ENCODE measurements at regions of chr4 and their contacts with region 1.

Region 1: DNA sequence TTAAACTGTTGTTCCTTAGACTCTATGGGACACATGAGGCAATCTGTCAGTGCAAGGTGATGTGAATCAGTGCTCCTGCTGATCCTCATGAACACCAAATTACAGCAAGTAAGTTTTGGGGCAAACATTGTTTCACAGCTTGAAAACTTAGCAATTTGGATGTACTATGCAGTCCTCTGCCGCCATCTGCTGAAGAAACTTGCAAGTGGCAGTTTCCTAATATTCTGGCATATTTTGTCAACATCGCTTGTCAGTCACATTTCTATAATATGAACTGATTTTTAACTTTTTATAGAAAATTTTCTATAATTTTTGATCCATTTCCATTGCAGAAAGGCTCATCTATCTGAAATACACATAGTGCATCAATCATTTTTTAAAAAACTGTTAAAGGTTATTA is 56.3 kb downstream of the ZAR1 start:
- DNase-seq: peak; percentile 39
- ATAC-seq: no peak
- H3K4me3 ChIP-seq: no peak overlapping the region
- H3K27ac ChIP-seq: no peak overlapping the region
- H3K4me1 ChIP-seq: no peaks in the 10 kb centered on the region
- H3K27me3 ChIP-seq: no peaks in the 10 kb centered on the region
- CTCF ChIP-seq: peak; percentile 58

Region 2: GRCh38 chr4:48008021-48008596 is 538.2 kb before region 1 on chr4:
- CTCF ChIA-PET with region 1: no interaction called
- POLR2A ChIA-PET with region 1: no interaction called
- intact Hi-C with region 1: no loop called
- DNase-seq: peak; percentile 3
- ATAC-seq: no peak
- H3K4me3 ChIP-seq: no peak overlapping the region
- H3K27ac ChIP-seq: no peak overlapping the region
- H3K4me1 ChIP-seq: no peaks in the 10 kb centered on the region
- H3K27me3 ChIP-seq: no peaks in the 10 kb centered on the region
- CTCF ChIP-seq: no peak

Region 3: GRCh38 chr4:48315728-48316630 is 230.4 kb before region 1 on chr4:
- CTCF ChIA-PET with region 1: no interaction called
- POLR2A ChIA-PET with region 1: no interaction called
- intact Hi-C with region 1: loop called (anchors 1 kb)
- DNase-seq: peak; percentile 63
- ATAC-seq: peak; percentile 73
- H3K4me3 ChIP-seq: no peak overlapping the region
- H3K27ac ChIP-seq: no peak overlapping the region
- H3K4me1 ChIP-seq: no peaks in the 10 kb centered on the region
- H3K27me3 ChIP-seq: no peaks in the 10 kb centered on the region
- CTCF ChIP-seq: peak; percentile 77

Region 4: DNA sequence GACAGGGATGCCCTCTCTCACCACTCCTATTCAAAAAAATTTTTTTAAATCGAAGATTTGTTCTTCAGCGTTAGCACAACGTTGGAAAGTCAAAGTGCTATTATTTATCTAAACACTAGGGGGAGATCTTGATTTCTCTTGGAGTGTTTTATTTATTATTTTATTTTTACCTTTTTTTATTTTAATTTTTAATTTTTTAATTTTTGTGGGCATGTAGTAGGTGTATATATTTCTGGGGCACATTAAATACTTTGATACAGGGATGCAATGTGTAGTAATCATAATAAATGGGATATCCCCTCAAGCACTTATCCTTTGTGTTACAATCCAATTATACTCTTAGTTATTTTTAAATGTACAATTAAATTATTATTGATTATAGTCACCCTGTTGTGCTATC is 100.6 kb before region 1 on chr4:
- CTCF ChIA-PET with region 1: interaction called, 3 read pairs
- POLR2A ChIA-PET with region 1: no interaction called
- intact Hi-C with region 1: loop called (anchors 5 kb)
- DNase-seq: peak; percentile 56
- ATAC-seq: no peak
- H3K4me3 ChIP-seq: no peak overlapping the region
- H3K27ac ChIP-seq: no peak overlapping the region
- H3K4me1 ChIP-seq: no peaks in the 10 kb centered on the region
- H3K27me3 ChIP-seq: no peaks in the 10 kb centered on the region
- CTCF ChIP-seq: 0 out of 2 replicates have a peak, but pooled peaks have one; percentile 17

Measured in PC-3 (cell line).